Tibial artery (tissue), 4 donors: ENCODE measurements at regions of chr20 and their contacts with region 1.

Region 1: DNA sequence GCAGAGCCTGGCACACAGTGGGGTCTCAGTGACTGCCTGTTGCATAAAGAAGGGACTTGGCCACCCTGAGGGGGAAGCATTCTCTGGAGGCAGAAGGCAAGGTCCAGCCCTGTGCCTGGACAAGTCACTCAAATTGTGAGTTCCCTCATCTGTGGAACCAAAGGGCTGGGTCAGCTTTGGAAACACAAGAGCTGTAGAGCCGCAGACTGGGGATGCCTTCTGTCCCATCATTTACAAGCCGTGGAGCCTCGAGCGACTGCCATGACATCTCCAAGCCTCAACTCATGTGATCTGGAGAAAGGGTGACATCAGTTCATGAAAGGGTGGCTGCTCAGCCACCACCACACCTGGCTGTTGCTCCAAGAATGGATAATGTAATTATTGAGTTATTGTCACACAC is 20.4 kb upstream of the SIRPD start:
- DNase-seq: no peak
- H3K4me3 ChIP-seq: no peak overlapping the region
- H3K27ac ChIP-seq: no peak overlapping the region
- H3K4me1 ChIP-seq: no peaks in the 10 kb centered on the region
- H3K27me3 ChIP-seq: no peaks in the 10 kb centered on the region
- CTCF ChIP-seq: no peak

Region 2: GRCh38 chr20:1619861-1620444 is 42.0 kb after region 1 on chr20 and contains the start of gene SIRPB1:
- intact Hi-C with region 1: loop called (anchors 2 kb)
- DNase-seq: no peak
- H3K4me3 ChIP-seq: no peak within 1 kb of the TSS
- H3K27ac ChIP-seq: no peak within 1 kb of the TSS
- H3K4me1 ChIP-seq: no peaks in the 10 kb centered on the region
- H3K27me3 ChIP-seq: no peaks in the 10 kb centered on the region
- CTCF ChIP-seq: no peak

Region 3: GRCh38 chr20:1651268-1652058 is 73.6 kb after region 1 on chr20:
- intact Hi-C with region 1: no loop called
- DNase-seq: no peak
- H3K4me3 ChIP-seq: no peak overlapping the region
- H3K27ac ChIP-seq: no peak overlapping the region
- H3K4me1 ChIP-seq: no peaks in the 10 kb centered on the region
- H3K27me3 ChIP-seq: no peaks in the 10 kb centered on the region
- CTCF ChIP-seq: no peak

Region 4: GRCh38 chr20:1685304-1686052 is 107.6 kb after region 1 on chr20:
- intact Hi-C with region 1: no loop called
- DNase-seq: no peak
- H3K4me3 ChIP-seq: no peak overlapping the region
- H3K27ac ChIP-seq: no peak overlapping the region
- H3K4me1 ChIP-seq: no peaks in the 10 kb centered on the region
- H3K27me3 ChIP-seq: no peaks in the 10 kb centered on the region
- CTCF ChIP-seq: no peak

Region 5: DNA sequence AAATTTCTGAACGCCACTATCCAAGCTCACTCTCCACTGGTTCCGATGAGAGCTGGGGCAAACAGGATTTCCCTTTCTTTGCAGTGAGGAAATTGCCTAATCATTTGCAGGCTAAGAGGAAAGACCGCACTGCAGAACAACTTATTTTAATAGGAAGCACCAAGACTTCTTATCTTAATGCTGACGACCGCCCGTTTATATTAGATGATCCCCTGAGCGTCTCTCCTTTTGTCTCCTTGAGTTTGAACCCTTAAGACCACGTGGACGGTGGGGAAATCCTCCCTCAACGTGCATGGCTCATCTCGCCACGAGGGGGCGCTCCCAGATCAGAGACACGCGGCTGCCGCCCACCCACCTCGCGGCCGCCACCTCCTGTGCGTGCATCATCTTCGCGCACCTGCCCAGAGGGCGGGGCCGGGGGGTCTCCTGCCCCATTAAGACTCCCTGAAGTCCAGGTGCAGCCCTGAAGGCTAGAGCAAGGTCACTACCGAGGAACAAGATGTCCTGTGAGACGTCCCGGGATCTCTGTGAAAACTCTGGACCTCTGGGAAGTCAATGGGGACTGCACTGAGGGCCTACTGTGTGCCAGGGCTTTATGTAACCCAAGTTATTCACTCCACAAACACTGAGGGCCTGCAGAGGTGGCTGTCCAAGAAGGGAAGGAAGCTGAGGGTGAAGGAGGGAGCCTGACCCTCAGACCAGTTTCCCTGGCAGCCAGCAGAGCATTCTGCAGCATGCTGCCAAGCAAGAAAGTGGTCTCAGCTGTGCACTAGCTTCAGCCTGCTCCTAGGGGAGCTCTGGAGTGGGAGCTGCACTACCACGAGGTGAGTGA is 387.8 kb after region 1 on chr20:
- intact Hi-C with region 1: no loop called
- DNase-seq: peak; percentile 71 to 82
- H3K4me3 ChIP-seq: no peak overlapping the region
- H3K27ac ChIP-seq: no peak overlapping the region
- H3K4me1 ChIP-seq: peaks cover 0 to 11% (median 3%) of the 10 kb centered on the region in 4 donors
- H3K27me3 ChIP-seq: peaks cover 0 to 40% of the 10 kb centered on the region in 2 donors
- CTCF ChIP-seq: peak; percentile 84 to 89